Activated CD8-positive, alpha-beta T cell treated with anti-CD3 and anti-CD28 coated beads, Interleukin-2, amount 10 ng/mL, durations not matched to agents 7 days and 5 days (primary cell): ENCODE measurements at regions of chr3 and their contacts with region 1.

Region 1: DNA sequence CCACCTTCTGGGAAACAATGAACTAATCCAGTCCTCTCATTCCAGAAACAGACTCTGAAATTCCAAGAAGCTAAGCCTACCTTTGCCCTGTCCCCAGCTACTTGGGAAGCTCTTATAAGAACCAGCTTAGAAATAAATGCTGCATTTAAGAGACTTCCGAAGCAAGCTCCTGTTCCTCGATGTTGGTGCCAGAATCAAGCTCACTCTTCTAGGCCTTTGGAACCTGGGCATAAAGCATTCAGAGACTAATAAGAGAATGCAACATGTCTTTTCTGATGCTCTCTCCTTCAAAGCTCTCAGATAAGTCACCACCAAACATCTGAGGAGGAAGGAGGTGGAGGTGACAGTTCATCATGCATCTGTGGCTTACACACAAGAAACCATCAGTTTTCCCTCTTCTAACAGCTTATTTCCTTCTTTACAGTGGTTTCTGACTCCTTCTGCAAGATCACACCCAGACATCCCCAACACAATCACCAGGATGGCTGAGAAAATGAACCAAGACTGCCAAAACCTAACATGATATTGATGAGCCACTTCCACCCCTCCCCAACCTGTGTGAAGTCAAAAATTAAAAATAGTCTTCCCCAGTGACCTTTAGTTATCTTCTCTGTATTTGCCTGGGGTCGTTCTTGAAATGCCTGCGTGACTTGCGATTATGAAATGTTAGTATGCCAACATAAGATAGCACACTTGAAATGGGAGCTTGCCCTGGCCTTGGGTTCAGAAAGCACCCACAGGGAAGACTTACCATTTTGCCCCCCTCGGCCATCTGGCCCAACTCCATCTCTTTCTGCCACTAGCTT is 11.5 kb downstream of the ARHGEF3 start:
- DNase-seq: peak; percentile 49
- ATAC-seq: peak; percentile 46
- H3K4me3 Mint-ChIP-seq: peak overlapping the region; percentile 60
- H3K27ac Mint-ChIP-seq: peak overlapping the region; percentile 91
- H3K4me1 Mint-ChIP-seq: peaks cover 90% of the 10 kb centered on the region
- H3K27me3 Mint-ChIP-seq: no peaks in the 10 kb centered on the region

Region 2: GRCh38 chr3:56753206-56753820 is 36.9 kb before region 1 on chr3:
- CTCF ChIA-PET with region 1: interaction called, 242 read pairs
- POLR2A ChIA-PET with region 1: interaction called, 45 read pairs
- DNase-seq: peak; percentile 62
- ATAC-seq: peak; percentile 71
- H3K4me3 Mint-ChIP-seq: peak overlapping the region; percentile 48
- H3K27ac Mint-ChIP-seq: peak overlapping the region; percentile 79
- H3K4me1 Mint-ChIP-seq: peaks cover 73% of the 10 kb centered on the region
- H3K27me3 Mint-ChIP-seq: no peaks in the 10 kb centered on the region